Activated CD4-positive, alpha-beta memory T cell treated with anti-CD3 and anti-CD28 coated beads, Interleukin-2, amount 10 ng/mL, durations not matched to agents 7 days and 5 days (primary cell): ENCODE measurements at regions of chr13 and their contacts with region 1.

Region 1: GRCh38 chr13:30371649-30372265 is 50.5 kb upstream of the UBE2L5 start:
- DNase-seq: peak; percentile 73
- H3K4me3 Mint-ChIP-seq: peak overlapping the region; percentile 78
- H3K27ac Mint-ChIP-seq: peak overlapping the region; percentile 96
- H3K4me1 Mint-ChIP-seq: peaks cover 79% of the 10 kb centered on the region
- H3K27me3 Mint-ChIP-seq: no peaks in the 10 kb centered on the region

Region 2: GRCh38 chr13:30045916-30046704 is 325.6 kb before region 1 on chr13:
- CTCF ChIA-PET with region 1: no interaction called
- POLR2A ChIA-PET with region 1: no interaction called
- DNase-seq: no peak
- H3K4me3 Mint-ChIP-seq: no peak overlapping the region
- H3K27ac Mint-ChIP-seq: peak overlapping the region; percentile 8
- H3K4me1 Mint-ChIP-seq: peaks cover 39% of the 10 kb centered on the region
- H3K27me3 Mint-ChIP-seq: no peaks in the 10 kb centered on the region

Region 3: DNA sequence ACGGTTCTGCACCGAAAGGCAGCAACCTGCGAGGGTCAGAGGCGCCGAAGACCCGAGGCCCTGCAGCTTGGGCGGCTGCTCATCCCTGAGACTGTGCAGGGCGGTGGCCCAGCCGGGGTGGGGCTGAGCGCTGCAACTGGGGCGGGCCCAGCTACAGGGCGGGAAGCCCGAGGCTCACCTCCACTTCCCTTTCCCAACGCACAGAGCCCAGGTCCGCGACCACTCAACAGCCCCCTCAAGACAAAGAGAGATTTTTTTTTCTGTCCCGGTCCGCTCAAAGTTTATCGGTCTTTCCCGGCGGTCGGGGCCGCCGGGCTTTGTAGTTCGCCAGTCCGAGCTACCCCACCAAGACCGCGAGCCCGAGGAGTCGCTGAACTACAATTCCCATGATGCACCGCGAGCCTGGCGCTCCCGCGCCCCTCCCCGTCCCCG is 65.0 kb before region 1 on chr13:
- CTCF ChIA-PET with region 1: interaction called, 17 read pairs
- POLR2A ChIA-PET with region 1: interaction called, 22 read pairs
- DNase-seq: peak; percentile 92
- H3K4me3 Mint-ChIP-seq: peak overlapping the region; percentile 77
- H3K27ac Mint-ChIP-seq: peak overlapping the region; percentile 78
- H3K4me1 Mint-ChIP-seq: peaks cover 49% of the 10 kb centered on the region
- H3K27me3 Mint-ChIP-seq: no peaks in the 10 kb centered on the region

Region 4: DNA sequence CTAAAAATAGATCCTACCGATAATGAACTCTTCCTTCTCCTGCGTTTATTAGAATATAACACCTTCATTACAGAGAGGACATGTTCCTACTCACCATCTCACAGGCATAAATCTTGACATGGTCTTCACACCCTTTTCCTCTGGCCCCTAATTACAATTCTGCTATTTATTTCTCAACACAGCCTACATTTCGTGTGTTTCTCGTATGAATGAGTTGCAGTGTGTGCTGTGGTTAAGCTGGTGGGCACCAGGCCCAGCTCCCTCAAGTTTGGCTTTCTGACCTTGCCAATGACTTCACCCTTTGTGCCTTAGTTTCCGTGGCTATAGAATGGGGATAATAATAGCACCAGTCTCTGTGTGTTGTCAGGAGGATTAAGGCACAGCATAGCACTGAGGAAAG is 52.1 kb before region 1 on chr13:
- CTCF ChIA-PET with region 1: no interaction called
- POLR2A ChIA-PET with region 1: no interaction called
- DNase-seq: no peak
- H3K4me3 Mint-ChIP-seq: no peak overlapping the region
- H3K27ac Mint-ChIP-seq: no peak overlapping the region
- H3K4me1 Mint-ChIP-seq: peaks cover 1% of the 10 kb centered on the region
- H3K27me3 Mint-ChIP-seq: no peaks in the 10 kb centered on the region

Region 5: GRCh38 chr13:30388406-30389283 is 16.9 kb after region 1 on chr13:
- CTCF ChIA-PET with region 1: interaction called, 28 read pairs
- POLR2A ChIA-PET with region 1: interaction called, 265 read pairs
- DNase-seq: no peak
- H3K4me3 Mint-ChIP-seq: peak overlapping the region; percentile 48
- H3K27ac Mint-ChIP-seq: peak overlapping the region; percentile 83
- H3K4me1 Mint-ChIP-seq: peaks cover 26% of the 10 kb centered on the region
- H3K27me3 Mint-ChIP-seq: no peaks in the 10 kb centered on the region

Region 6: DNA sequence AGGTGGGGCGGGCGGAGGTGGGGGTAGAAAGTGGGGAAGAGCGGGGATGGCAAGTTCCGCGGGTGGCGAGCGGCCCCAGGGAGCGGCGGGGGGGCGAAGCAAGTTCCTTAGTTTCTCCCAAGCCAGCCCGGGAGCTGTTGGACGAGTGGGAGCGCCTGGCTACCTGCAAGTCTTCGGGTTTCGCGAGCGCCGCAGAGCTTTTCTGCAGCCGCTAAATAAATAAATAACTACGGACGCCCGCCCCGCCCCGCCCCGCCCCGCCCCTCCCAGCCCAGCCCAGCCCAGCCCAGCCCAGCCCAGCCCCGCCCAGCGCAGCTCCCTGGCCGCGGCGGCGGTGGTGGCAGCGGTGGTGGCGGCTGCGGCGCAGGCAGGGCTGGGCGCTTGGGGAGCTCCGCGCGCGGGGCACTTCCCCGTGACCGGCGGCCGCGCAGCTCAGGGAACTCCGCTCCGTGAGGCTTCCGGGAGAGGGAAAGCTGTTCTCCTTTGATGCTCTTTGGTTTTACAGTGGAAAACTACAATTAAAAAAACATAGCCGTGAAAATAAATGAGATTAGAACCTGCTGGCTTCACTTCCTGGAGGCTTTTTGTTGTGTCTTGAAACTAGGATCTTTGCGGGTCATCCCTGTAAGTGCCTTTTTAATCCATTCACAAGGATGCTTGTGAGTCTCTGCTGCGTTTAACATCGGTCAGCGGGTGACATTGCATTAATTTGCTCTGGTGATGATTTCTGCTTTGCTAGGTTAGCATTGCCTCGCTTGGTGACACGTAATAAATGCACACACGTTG is 50.5 kb after region 1 on chr13 and contains the start of gene UBE2L5:
- CTCF ChIA-PET with region 1: interaction called, 7 read pairs
- POLR2A ChIA-PET with region 1: interaction called, 34 read pairs
- DNase-seq: peak; percentile 80
- H3K4me3 Mint-ChIP-seq: peak within 1 kb of the TSS; percentile 77
- H3K27ac Mint-ChIP-seq: peak within 1 kb of the TSS; percentile 73
- H3K4me1 Mint-ChIP-seq: peaks cover 15% of the 10 kb centered on the region
- H3K27me3 Mint-ChIP-seq: peaks cover 4% of the 10 kb centered on the region
- total RNA-seq, gene UBE2L5: 0.20 TPM in 1 of 2 experiments, not detected in the other